ENCODE measurements at regions of chr6 and their contacts with region 1.

Region 1: DNA sequence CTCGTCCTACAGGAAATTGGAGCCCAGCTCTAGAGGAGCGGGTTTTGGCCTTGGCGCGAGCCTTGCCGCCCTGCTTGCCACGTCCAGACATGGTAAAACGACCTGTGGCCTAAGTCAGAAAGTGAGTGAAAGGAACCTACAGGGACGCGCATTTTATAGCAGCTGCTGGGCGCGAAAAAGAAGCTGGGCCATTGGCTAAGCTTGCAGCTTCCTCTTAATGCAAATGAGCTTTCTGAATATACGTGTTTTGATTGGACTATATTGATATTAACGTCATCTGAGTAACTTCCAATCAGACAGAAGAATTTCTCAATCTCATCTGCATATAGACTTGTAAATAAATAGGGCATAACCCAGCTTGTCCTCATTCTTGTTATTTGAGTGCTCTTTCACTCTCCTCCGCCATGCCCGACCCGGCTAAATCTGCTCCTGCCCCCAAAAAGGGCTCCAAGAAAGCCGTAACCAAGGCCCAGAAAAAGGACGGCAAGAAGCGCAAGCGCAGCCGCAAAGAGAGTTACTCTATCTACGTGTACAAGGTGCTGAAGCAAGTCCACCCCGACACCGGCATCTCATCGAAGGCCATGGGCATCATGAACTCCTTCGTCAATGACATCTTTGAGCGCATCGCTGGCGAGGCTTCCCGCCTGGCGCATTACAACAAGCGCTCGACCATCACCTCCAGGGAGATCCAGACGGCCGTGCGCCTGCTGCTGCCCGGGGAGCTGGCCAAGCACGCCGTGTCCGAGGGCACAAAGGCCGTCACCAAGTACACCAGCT is 18.9 kb downstream of the OR2B2 start:
- DNase-seq: peak; percentile 71 to 80 (median 74)
- ATAC-seq: peak; percentile 27 to 78 (median 64)
- H3K4me3 ChIP-seq: peak overlapping the region; percentile 33 to 89 (median 74)
- H3K27ac ChIP-seq: peak overlapping the region in 10 of 12 donors; percentile 18 to 91 (median 33)
- H3K4me1 ChIP-seq: peaks cover 0 to 36% (median 18%) of the 10 kb centered on the region in 12 donors
- H3K27me3 ChIP-seq: peaks cover 0 to 50% (median 20%) of the 10 kb centered on the region in 9 donors
- CTCF ChIP-seq: no peak
- POLR2A ChIP-seq: peak in 1 of 2 donors; percentile 82

Region 2: DNA sequence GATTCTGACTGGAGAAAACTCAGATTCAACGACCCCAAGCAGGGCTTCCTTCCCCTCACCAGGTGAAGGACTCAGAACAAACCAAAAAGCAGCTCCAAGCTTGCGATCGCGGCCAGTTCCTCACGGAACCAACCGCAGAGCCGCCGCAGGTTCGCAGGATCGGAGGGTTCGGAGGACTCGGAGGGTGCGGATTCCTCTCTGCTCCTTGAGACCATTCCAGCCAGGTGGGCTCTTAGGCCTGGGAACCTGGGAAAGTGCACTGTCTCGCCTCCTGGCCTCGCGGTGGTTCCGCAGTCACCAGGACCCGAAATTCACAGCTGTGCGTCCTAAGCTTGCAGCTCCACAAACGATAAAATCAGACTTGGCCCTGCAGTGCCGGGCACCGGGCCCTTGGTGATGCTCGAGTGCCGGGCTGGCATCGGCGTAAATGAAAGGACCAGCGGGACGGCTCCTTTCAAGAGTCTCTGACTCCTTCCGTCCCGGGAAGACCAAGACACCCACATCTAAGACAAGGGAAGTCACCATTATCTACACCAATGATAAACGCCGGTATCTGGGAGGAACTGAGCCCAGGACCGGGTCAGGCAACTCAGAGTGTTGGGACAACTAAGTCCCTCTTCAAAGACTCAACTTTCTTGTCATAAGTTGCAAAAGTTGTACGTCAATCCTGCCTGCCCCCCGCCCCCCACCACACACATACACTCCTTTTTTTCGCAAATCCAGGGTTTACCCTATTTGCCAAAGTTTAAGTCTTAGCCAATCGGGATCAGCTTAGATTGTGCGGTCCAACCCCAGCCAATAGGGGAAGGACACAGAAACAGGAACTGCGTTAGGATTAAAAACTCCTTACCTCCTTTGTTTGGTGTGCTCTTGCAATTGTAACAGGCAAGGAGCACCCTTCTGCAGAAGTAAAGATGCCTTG is 715.5 kb before region 1 on chr6:
- intact Hi-C with region 1: loop called in 2 of 10 experiments (anchors 5 to 10 kb)
- DNase-seq: peak; percentile 61 to 83 (median 74)
- ATAC-seq: peak; percentile 77 to 91 (median 90)
- H3K4me3 ChIP-seq: peak overlapping the region; percentile 62 to 96 (median 76)
- H3K27ac ChIP-seq: peak overlapping the region in 11 of 12 donors; percentile 14 to 83 (median 67)
- H3K4me1 ChIP-seq: peaks cover 0 to 17% (median 5%) of the 10 kb centered on the region in 12 donors
- H3K27me3 ChIP-seq: no peaks in the 10 kb centered on the region
- CTCF ChIP-seq: peak in 9 of 12 donors; percentile 19 to 51 (median 35)
- POLR2A ChIP-seq: peak in 1 of 2 donors; percentile 39

Region 3: GRCh38 chr6:27479319-27480182 is 413.7 kb before region 1 on chr6:
- intact Hi-C with region 1: loop called in 4 of 10 experiments (anchors 2 to 10 kb)
- DNase-seq: peak; percentile 51 to 89 (median 76)
- ATAC-seq: peak; percentile 89 to 95 (median 94)
- H3K4me3 ChIP-seq: peak overlapping the region; percentile 70 to 96 (median 76)
- H3K27ac ChIP-seq: peak overlapping the region; percentile 92 to 100 (median 96)
- H3K4me1 ChIP-seq: peaks cover 0 to 15% (median 10%) of the 10 kb centered on the region in 12 donors
- H3K27me3 ChIP-seq: no peaks in the 10 kb centered on the region
- CTCF ChIP-seq: no peak
- POLR2A ChIP-seq: peak in 1 of 2 donors; percentile 24

Region 4: GRCh38 chr6:27772261-27773001 is 120.8 kb before region 1 on chr6:
- intact Hi-C with region 1: loop called in 9 of 10 experiments (anchors 1 to 5 kb)
- DNase-seq: peak; percentile 76 to 94 (median 85)
- ATAC-seq: peak; percentile 58 to 99 (median 94)
- H3K4me3 ChIP-seq: no peak overlapping the region
- H3K27ac ChIP-seq: no peak overlapping the region
- H3K4me1 ChIP-seq: peaks cover 0 to 16% (median 4%) of the 10 kb centered on the region in 12 donors
- H3K27me3 ChIP-seq: peaks cover 5 to 79% (median 29%) of the 10 kb centered on the region in 9 donors
- CTCF ChIP-seq: peak; percentile 85 to 96 (median 90)
- POLR2A ChIP-seq: no peak

Region 5: DNA sequence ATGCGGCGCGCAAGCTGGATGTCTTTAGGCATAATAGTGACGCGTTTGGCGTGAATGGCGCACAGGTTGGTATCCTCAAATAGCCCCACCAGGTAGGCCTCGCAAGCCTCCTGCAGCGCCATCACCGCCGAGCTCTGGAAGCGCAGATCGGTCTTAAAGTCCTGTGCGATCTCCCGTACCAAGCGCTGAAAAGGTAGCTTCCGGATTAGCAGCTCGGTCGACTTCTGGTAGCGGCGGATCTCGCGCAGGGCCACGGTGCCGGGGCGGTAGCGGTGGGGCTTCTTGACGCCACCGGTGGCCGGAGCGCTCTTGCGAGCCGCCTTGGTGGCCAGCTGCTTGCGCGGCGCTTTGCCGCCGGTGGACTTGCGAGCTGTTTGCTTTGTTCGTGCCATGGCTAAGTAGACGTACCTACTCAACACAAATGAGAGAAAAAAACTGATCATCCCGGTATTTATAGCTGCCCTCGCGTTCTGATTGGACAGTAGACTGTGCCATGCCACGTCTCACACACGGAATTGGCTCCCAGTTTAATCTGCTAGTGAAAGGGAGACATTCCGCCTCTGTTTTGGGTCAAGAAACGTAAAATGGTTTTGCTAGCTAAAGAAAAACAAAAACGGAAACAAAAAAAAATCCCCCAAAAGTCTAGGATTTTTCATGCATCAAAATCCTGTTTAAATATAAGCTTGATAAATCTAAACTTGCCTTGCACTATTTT is 21.2 kb before region 1 on chr6:
- intact Hi-C with region 1: loop called in 2 of 10 experiments (anchors 2 kb)
- DNase-seq: peak; percentile 60 to 80 (median 74)
- ATAC-seq: peak in 3 of 4 donors; percentile 89 to 90 (median 90)
- H3K4me3 ChIP-seq: peak overlapping the region; percentile 21 to 72 (median 59)
- H3K27ac ChIP-seq: peak overlapping the region in 11 of 12 donors; percentile 27 to 94 (median 53)
- H3K4me1 ChIP-seq: peaks cover 0 to 42% (median 8%) of the 10 kb centered on the region in 12 donors
- H3K27me3 ChIP-seq: peaks cover 0 to 82% (median 41%) of the 10 kb centered on the region in 9 donors
- CTCF ChIP-seq: peak in 1 of 12 donors; percentile 12
- POLR2A ChIP-seq: peak; percentile 58 to 94

Measured in heart left ventricle (tissue), 16 donors.